ENCODE measurements at regions of chr4 and their contacts with region 1.

Region 1: GRCh38 chr4:132396636-132397035 is 752.5 kb upstream of the PCDH10 start:
- DNase-seq: no peak
- H3K4me3 ChIP-seq: no peak overlapping the region
- H3K27ac ChIP-seq: no peak overlapping the region
- H3K4me1 ChIP-seq: no peaks in the 10 kb centered on the region
- CTCF ChIP-seq: no peak

Region 2: DNA sequence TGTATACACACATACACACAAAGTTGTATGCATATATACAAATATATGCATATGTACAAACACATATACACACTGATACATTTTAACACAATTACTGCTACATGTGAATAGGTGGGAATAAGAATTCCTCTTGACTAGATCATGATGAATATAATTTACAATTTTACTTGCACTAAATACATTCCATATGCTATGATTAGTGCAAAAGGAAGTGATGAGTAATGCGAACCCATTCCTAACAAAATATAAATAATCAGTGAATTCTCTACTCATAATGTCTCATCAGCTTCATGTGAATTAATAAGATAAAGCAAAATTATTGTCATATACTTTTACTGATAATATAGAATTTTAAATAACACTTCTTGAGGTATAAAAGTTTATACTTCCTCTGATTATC is 324.8 kb before region 1 on chr4:
- CTCF ChIA-PET with region 1: no interaction called
- POLR2A ChIA-PET with region 1: no interaction called
- intact Hi-C with region 1: no loop called
- DNase-seq: no peak
- H3K4me3 ChIP-seq: no peak overlapping the region
- H3K27ac ChIP-seq: no peak overlapping the region
- H3K4me1 ChIP-seq: no peaks in the 10 kb centered on the region
- CTCF ChIP-seq: no peak

Region 3: GRCh38 chr4:132238697-132239096 is 157.9 kb before region 1 on chr4:
- CTCF ChIA-PET with region 1: no interaction called
- POLR2A ChIA-PET with region 1: no interaction called
- intact Hi-C with region 1: loop called (anchors 5 kb)
- DNase-seq: no peak
- H3K4me3 ChIP-seq: no peak overlapping the region
- H3K27ac ChIP-seq: no peak overlapping the region
- H3K4me1 ChIP-seq: no peaks in the 10 kb centered on the region
- CTCF ChIP-seq: no peak

Region 4: DNA sequence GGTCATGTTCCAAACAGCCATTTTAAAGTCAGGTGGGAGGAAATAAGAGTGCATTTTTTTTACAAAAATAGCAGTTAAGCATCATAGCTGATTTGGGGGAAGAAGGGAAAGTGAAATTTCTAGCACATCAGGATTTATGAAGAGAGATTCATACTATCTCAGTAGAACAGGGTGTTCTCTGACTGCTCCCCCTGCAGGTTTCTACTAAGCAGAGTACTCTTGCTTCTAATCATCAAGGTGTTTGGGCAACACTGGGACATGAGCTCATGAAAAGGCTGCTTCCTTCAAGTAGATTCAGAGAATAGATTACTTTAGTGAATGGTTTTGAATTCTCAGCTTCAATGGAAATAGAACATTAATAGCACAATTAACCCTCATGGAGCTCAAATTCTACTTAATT is 161.0 kb after region 1 on chr4:
- CTCF ChIA-PET with region 1: no interaction called
- POLR2A ChIA-PET with region 1: no interaction called
- intact Hi-C with region 1: no loop called
- DNase-seq: peak; percentile 35
- H3K4me3 ChIP-seq: no peak overlapping the region
- H3K27ac ChIP-seq: no peak overlapping the region
- H3K4me1 ChIP-seq: no peaks in the 10 kb centered on the region
- CTCF ChIP-seq: peak; percentile 54; the same call in 1 of the 2 replicates